ENCODE measurements at regions of chr3 and their contacts with region 1.

Region 1: GRCh38 chr3:194573691-194574437 is 59.4 kb downstream of the TMEM44 start:
- DNase-seq: peak; percentile 48
- ATAC-seq: peak; percentile 89
- H3K4me3 ChIP-seq: no peak overlapping the region; a peak in 1 of 6 replicates
- H3K27ac ChIP-seq: no peak overlapping the region
- H3K4me1 ChIP-seq: peaks cover 64% of the 10 kb centered on the region
- H3K27me3 ChIP-seq: no peaks in the 10 kb centered on the region
- CTCF ChIP-seq: peak; percentile 95
- EP300 ChIP-seq: no peak
- POLR2A ChIP-seq: no peak
- RAD21 ChIP-seq: peak; percentile 75

Region 2: GRCh38 chr3:194486540-194487288 is 87.2 kb before region 1 on chr3 and contains the start of gene ATP13A3:
- CTCF ChIA-PET with region 1: no interaction called
- POLR2A ChIA-PET with region 1: interaction called, 4 read pairs
- in situ Hi-C with region 1: no loop called
- intact Hi-C with region 1: loop called (anchors 5 kb)
- DNase-seq: peak; percentile 65
- ATAC-seq: peak; percentile 85
- H3K4me3 ChIP-seq: peak within 1 kb of the TSS; percentile 72 to 95 (median 78)
- H3K27ac ChIP-seq: peak within 1 kb of the TSS; percentile 73
- H3K4me1 ChIP-seq: peaks cover 73% of the 10 kb centered on the region
- H3K27me3 ChIP-seq: peaks cover 0 to 1% of the 10 kb centered on the region in 2 experiments; a peak in 3 of 5 replicates
- CTCF ChIP-seq: peak; percentile 5; the same call in 1 of the 2 replicates
- EP300 ChIP-seq: 0 out of 4 replicates have a peak, but pooled peaks of 1 of the 2 experiments have one; percentile 17
- POLR2A ChIP-seq: peak in 1 of 2 experiments; percentile 70; a peak in 3 of 4 replicates
- RAD21 ChIP-seq: 0 out of 2 replicates have a peak, but pooled peaks have one; percentile 18
- total RNA-seq, gene ATP13A3: 80.8 and 82.6 TPM in 2 replicates

Region 3: GRCh38 chr3:194536871-194537637 is 36.8 kb before region 1 on chr3:
- CTCF ChIA-PET with region 1: no interaction called
- POLR2A ChIA-PET with region 1: interaction called, 7 read pairs
- in situ Hi-C with region 1: no loop called
- intact Hi-C with region 1: loop called (anchors 1 kb)
- DNase-seq: peak; percentile 70
- ATAC-seq: peak; percentile 90
- H3K4me3 ChIP-seq: peak overlapping the region in 2 of 3 experiments; percentile 42 to 57; a peak in 5 of 6 replicates
- H3K27ac ChIP-seq: peak overlapping the region; percentile 91
- H3K4me1 ChIP-seq: peaks cover 49% of the 10 kb centered on the region
- H3K27me3 ChIP-seq: no peaks in the 10 kb centered on the region
- CTCF ChIP-seq: no peak
- EP300 ChIP-seq: peak in 1 of 2 experiments; percentile 67; a peak in 2 of 4 replicates
- POLR2A ChIP-seq: 0 out of 4 replicates have a peak, but pooled peaks of 1 of the 2 experiments have one; percentile 25
- RAD21 ChIP-seq: no peak

Region 4: GRCh38 chr3:194556086-194557056 is 17.5 kb before region 1 on chr3:
- CTCF ChIA-PET with region 1: no interaction called
- POLR2A ChIA-PET with region 1: interaction called, 17 read pairs
- in situ Hi-C with region 1: no loop called
- intact Hi-C with region 1: no loop called
- DNase-seq: peak; percentile 30
- ATAC-seq: peak; percentile 74
- H3K4me3 ChIP-seq: peak overlapping the region; percentile 42 to 60 (median 55)
- H3K27ac ChIP-seq: no peak overlapping the region
- H3K4me1 ChIP-seq: peaks cover 54% of the 10 kb centered on the region
- H3K27me3 ChIP-seq: no peaks in the 10 kb centered on the region
- CTCF ChIP-seq: no peak
- EP300 ChIP-seq: no peak
- POLR2A ChIP-seq: 0 out of 4 replicates have a peak, but pooled peaks of 1 of the 2 experiments have one; percentile 35
- RAD21 ChIP-seq: no peak

Region 5: DNA sequence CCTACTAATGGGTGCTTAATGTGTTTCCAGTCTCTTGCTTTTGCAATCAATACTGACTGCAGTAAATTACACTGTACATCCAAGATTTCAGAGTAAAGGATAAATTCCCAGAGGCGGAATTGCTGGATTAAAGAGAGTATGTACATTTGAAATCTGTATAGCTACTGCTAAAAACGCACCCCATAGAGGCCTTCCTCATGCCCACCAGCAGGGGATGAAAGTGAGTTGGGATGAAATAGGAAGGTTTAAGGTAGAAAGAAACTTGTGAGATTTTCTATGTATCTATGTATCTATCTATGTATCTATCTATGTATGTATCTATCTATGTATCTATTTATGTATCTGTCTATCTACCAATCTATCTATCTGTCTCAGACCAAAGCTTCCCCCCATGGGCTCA is 31.0 kb after region 1 on chr3:
- CTCF ChIA-PET with region 1: no interaction called
- POLR2A ChIA-PET with region 1: no interaction called
- in situ Hi-C with region 1: no loop called
- intact Hi-C with region 1: loop called (anchors 1 kb)
- DNase-seq: no peak
- ATAC-seq: peak; percentile 56
- H3K4me3 ChIP-seq: no peak overlapping the region
- H3K27ac ChIP-seq: no peak overlapping the region
- H3K4me1 ChIP-seq: no peaks in the 10 kb centered on the region
- H3K27me3 ChIP-seq: no peaks in the 10 kb centered on the region
- CTCF ChIP-seq: peak; percentile 25; the same call in 1 of the 2 replicates
- EP300 ChIP-seq: no peak
- POLR2A ChIP-seq: no peak
- RAD21 ChIP-seq: no peak